GM12878 (cell line): ENCODE measurements at regions of chr12 and their contacts with region 1.

Region 1: GRCh38 chr12:39272871-39273770 is 169.8 kb downstream of the KIF21A start:
- DNase-seq: no peak
- ATAC-seq: peak; percentile 61
- H3K4me3 ChIP-seq: no peak overlapping the region
- H3K27ac ChIP-seq: no peak overlapping the region
- H3K4me1 ChIP-seq: no peaks in the 10 kb centered on the region
- H3K27me3 ChIP-seq: no peaks in the 10 kb centered on the region
- CTCF ChIP-seq: peak; percentile 56 to 64 (median 59)
- EP300 ChIP-seq: no peak
- POLR2A ChIP-seq: no peak
- RAD21 ChIP-seq: peak; percentile 78

Region 2: GRCh38 chr12:38324896-38325295 is 948.2 kb before region 1 on chr12:
- CTCF ChIA-PET with region 1: interaction called, 14 read pairs
- POLR2A ChIA-PET with region 1: no interaction called
- RAD21 ChIA-PET with region 1: interaction called, 10 read pairs
- SMC1A ChIA-PET with region 1: interaction called, 14 read pairs
- in situ Hi-C with region 1: loop called (anchors 5 kb)
- intact Hi-C with region 1: loop called (anchors 2 kb)
- DNase-seq: no peak
- ATAC-seq: no peak
- H3K4me3 ChIP-seq: no peak overlapping the region
- H3K27ac ChIP-seq: no peak overlapping the region
- H3K4me1 ChIP-seq: no peaks in the 10 kb centered on the region
- H3K27me3 ChIP-seq: no peaks in the 10 kb centered on the region
- CTCF ChIP-seq: no peak
- EP300 ChIP-seq: no peak
- POLR2A ChIP-seq: no peak
- RAD21 ChIP-seq: no peak

Region 3: DNA sequence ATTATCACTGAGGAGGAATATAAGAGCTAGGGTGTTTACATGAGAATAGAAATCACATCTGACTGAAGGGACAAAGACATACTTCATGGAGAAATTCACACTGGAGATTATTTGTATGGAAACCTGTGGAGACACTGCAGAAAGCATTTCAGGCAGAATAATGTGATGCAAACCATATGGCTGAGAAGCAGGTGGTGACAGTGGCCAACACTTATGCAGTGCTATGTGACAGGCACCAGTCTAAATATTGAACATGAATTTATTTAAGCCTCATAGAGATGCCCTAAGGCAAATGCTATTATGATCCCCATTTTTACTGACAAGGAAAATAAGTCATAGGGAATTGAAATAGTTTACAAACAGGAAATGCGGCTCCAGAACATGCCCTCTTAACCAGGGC is 940.3 kb before region 1 on chr12:
- CTCF ChIA-PET with region 1: interaction called, 14 read pairs
- POLR2A ChIA-PET with region 1: no interaction called
- RAD21 ChIA-PET with region 1: interaction called, 10 read pairs
- SMC1A ChIA-PET with region 1: interaction called, 14 read pairs
- in situ Hi-C with region 1: loop called (anchors 5 kb)
- intact Hi-C with region 1: loop called (anchors 2 kb)
- DNase-seq: no peak
- ATAC-seq: no peak
- H3K4me3 ChIP-seq: no peak overlapping the region
- H3K27ac ChIP-seq: no peak overlapping the region
- H3K4me1 ChIP-seq: no peaks in the 10 kb centered on the region
- H3K27me3 ChIP-seq: no peaks in the 10 kb centered on the region
- CTCF ChIP-seq: no peak
- EP300 ChIP-seq: no peak
- POLR2A ChIP-seq: no peak
- RAD21 ChIP-seq: no peak

Region 4: DNA sequence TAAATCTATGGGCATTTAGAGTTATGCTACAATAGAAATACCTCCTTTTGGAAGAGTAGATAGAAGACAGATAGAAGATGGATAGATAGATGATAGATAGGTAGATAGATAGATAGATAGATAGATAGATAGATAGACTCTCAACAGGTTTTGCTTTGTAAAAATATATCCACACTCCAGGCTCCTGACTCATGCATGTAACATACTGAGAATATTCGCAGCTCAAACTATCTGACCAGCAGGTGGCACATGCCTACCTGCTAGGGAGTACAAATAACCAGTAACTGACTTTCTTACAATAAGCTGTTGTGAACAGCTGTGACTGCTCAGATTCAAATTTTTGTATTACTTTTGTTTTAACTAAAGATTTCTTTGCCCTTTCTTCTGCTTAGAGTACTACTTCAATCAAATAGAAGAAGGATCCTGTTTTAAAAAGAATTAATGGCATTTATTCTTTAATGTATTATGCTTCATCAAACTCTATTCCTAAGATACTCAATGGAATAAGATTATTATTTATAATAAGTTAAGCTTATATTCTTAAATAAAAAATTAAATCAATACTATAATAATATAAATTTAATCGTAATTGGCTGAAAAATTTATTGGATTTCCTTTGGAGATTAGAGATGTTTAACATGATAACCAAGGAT is 352.0 kb before region 1 on chr12:
- CTCF ChIA-PET with region 1: interaction called, 42 read pairs
- POLR2A ChIA-PET with region 1: no interaction called
- RAD21 ChIA-PET with region 1: interaction called, 22 read pairs
- SMC1A ChIA-PET with region 1: interaction called, 26 read pairs
- in situ Hi-C with region 1: loop called (anchors 5 kb)
- intact Hi-C with region 1: loop called (anchors 2 kb)
- DNase-seq: no peak
- ATAC-seq: peak; percentile 95
- H3K4me3 ChIP-seq: no peak overlapping the region
- H3K27ac ChIP-seq: no peak overlapping the region
- H3K4me1 ChIP-seq: no peaks in the 10 kb centered on the region
- H3K27me3 ChIP-seq: no peaks in the 10 kb centered on the region
- CTCF ChIP-seq: peak; percentile 60 to 73 (median 61)
- EP300 ChIP-seq: no peak
- POLR2A ChIP-seq: no peak
- RAD21 ChIP-seq: peak; percentile 63

Region 5: DNA sequence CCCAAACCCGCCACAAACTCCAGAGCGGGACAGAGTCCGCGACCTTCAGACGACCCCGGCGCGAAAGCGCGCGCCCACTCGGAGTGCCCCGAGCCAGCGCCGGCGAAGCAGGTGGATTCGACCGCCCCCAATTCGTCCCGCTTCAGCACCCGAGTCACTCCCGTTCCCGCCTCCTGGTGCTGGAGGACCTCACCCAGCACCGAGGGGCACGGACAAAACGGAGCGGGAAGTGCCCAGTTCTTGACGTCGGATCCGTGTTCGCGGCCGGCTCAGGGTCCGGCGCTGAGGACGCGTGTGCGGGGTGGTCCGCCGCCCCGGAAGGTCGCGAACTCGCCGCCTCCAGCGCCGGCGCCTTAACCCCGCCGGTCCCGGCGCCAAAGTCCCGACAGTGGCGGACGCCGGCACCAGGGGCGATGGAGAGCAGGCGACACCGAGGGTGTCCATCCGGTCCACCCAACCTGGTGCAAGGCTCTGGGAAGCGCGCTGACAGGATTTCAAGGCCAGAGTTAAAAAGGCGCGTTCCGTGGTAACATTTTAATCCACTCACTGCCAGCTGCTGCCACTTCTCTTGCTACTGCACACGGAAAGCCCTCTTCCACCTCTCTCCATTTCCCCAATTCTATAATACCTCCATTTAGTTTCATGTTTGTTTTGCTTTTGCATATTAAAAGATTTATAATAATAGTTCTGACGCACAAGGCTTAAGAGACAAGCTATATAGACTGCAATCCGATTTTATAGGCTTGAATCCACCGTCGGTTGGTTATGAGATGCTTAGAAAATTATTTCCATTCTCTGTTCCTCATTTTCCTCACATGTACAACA is 127.7 kb before region 1 on chr12:
- CTCF ChIA-PET with region 1: interaction called, 12 read pairs
- POLR2A ChIA-PET with region 1: no interaction called
- RAD21 ChIA-PET with region 1: interaction called, 7 read pairs
- SMC1A ChIA-PET with region 1: interaction called, 5 read pairs
- in situ Hi-C with region 1: no loop called
- intact Hi-C with region 1: loop called (anchors 2 kb)
- DNase-seq: no peak
- ATAC-seq: peak; percentile 96
- H3K4me3 ChIP-seq: no peak overlapping the region; the same call in 1 of the 2 replicates
- H3K27ac ChIP-seq: no peak overlapping the region
- H3K4me1 ChIP-seq: no peaks in the 10 kb centered on the region
- H3K27me3 ChIP-seq: no peaks in the 10 kb centered on the region
- CTCF ChIP-seq: peak in 2 of 3 experiments; percentile 35 to 52; a peak in 3 of 6 replicates
- EP300 ChIP-seq: no peak
- POLR2A ChIP-seq: no peak
- RAD21 ChIP-seq: no peak

Region 6: DNA sequence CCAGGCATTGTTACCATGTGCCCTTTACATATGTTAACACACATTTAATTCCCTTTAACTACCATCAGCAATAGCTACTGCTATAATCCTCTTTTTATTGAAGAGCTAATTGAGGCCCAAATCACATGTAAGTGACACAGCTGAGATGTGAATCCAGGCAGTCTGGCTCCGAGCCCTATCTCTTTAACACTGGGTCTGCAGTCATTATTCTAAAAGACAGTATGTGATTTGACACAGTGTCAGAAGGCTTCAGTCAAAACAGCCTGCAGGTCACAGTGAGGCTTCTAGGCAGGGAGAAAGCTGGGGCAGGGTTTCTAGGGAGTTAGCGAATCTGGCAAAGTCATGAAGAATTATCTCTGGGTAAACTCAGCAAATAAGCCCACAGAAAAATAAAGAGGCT is 21.6 kb after region 1 on chr12:
- CTCF ChIA-PET with region 1: interaction called, 25 read pairs
- POLR2A ChIA-PET with region 1: no interaction called
- RAD21 ChIA-PET with region 1: no interaction called
- SMC1A ChIA-PET with region 1: interaction called, 5 read pairs
- in situ Hi-C with region 1: no loop called
- intact Hi-C with region 1: no loop called
- DNase-seq: no peak
- ATAC-seq: no peak
- H3K4me3 ChIP-seq: no peak overlapping the region
- H3K27ac ChIP-seq: no peak overlapping the region
- H3K4me1 ChIP-seq: no peaks in the 10 kb centered on the region
- H3K27me3 ChIP-seq: no peaks in the 10 kb centered on the region
- CTCF ChIP-seq: no peak
- EP300 ChIP-seq: no peak
- POLR2A ChIP-seq: no peak
- RAD21 ChIP-seq: no peak

Region 7: DNA sequence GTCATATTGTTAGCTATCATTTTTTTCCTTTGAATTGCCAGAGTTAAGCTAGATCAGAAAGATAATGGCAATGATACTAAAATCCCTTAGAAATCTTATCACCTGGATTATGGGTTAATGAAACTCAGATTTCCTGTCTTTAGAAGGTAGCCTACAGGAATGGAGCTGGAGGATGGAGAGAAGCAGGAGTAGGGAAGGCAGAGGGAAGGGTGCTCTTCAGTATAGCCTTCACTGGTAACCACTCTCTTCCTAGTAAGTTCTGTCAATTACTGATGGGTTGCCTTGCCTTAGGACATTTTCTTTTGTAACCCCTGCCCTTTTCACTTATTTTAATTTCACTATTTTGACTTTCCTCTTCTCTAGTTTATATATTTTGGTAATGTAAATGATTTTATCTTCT is 374.3 kb after region 1 on chr12:
- CTCF ChIA-PET with region 1: no interaction called
- POLR2A ChIA-PET with region 1: no interaction called
- RAD21 ChIA-PET with region 1: no interaction called
- SMC1A ChIA-PET with region 1: no interaction called
- in situ Hi-C with region 1: no loop called
- intact Hi-C with region 1: no loop called
- DNase-seq: no peak
- ATAC-seq: no peak
- H3K4me3 ChIP-seq: no peak overlapping the region
- H3K27ac ChIP-seq: no peak overlapping the region
- H3K4me1 ChIP-seq: no peaks in the 10 kb centered on the region; the same call in 1 of the 2 replicates
- H3K27me3 ChIP-seq: no peaks in the 10 kb centered on the region
- CTCF ChIP-seq: no peak
- EP300 ChIP-seq: no peak
- POLR2A ChIP-seq: no peak
- RAD21 ChIP-seq: no peak